ENCODE measurements at regions of chr4 and their contacts with region 1.

Region 1: DNA sequence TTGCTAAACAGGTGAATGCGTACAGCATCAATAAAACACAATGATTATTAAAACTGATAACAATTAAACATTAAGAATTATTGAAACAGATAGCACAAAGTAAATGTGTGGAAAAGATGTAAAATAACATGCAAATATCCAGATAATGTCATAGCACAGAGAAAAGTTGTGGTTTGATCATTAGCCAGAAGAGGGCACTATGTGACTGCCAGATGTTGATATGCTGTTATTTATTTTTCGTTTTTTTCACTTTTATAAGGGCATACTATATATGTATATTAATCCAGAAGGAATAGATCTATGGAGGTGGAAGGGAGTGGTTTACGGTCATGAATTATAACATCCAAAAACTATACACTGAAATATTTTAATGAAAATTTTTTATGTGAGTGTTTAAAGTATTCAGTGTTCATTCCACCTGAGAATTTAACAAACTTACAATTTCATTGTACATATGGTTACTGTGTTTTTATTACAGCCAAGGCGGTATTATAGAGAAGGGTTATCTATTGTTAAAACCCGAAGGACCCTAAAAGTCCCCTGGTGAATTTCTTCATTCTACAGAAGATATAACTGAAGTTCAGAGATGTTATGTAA is 211.9 kb upstream of the UGT8 start:
- DNase-seq: no peak
- ATAC-seq: no peak

Region 2: DNA sequence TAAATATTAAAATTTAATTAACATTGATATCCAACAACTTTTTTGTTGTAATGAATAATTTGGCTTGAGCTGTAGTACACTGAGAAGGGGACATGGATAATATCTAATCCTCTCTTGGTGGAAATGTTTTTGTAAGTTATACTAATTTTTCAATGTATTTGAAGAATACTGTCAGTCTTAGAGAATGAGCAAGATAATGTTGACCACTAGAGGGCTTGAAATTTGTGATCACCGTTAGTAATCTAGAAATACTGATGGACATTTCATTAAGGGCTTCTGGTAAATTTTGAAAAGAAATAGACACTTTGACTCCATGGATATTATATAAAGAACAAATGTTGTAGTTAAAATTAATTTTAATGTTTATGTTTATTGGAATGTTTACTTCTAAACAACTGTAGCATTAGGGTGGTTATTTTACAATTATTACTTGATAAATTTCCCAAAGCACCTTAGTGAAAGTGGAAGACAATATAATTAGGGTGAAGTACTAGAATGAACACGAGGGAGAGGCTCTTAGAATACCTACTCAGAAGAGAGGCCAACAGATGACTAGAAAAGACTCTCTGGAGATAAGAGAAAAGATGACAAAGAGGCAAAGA is 605.2 kb before region 1 on chr4:
- intact Hi-C with region 1: loop called (anchors 10 kb)
- DNase-seq: no peak
- ATAC-seq: peak; percentile 56

Region 3: GRCh38 chr4:114659386-114660008 is 272.8 kb after region 1 on chr4:
- intact Hi-C with region 1: loop called (anchors 2 kb)
- DNase-seq: no peak
- ATAC-seq: peak; percentile 84